Activated naive CD8-positive, alpha-beta T cell treated with anti-CD3 and anti-CD28 coated beads, Interleukin-2, amount 10 ng/mL, durations not matched to agents 7 days and 5 days (primary cell): ENCODE measurements at regions of chr19 and their contacts with region 1.

Region 1: DNA sequence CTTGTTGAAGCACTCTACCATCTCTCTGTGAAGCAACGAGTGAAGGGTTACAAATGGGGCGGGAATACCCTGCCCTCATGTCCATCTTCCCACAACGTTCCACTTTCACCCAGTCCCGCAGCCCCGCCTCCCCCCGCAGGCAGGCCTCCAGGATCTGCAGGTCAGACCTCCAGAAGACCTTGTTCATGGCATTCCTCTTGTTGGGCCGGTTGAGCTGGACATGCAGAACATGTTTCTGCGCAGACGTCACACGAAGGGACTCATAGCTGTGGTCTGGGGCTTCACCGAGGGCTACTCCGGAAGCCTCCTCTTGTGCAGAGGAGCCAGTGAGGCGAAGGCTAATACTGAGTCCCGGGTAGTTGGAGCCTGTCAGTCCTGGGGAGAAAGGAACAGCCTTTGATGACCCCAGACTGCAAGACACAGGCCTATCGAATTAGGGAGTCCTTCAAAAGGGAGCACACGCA is 420 bp downstream of the ECH1 start:
- DNase-seq: peak; percentile 59
- ATAC-seq: peak; percentile 49
- H3K4me3 Mint-ChIP-seq: peak overlapping the region; percentile 95
- H3K27ac Mint-ChIP-seq: peak overlapping the region; percentile 88
- H3K4me1 Mint-ChIP-seq: peaks cover 27% of the 10 kb centered on the region
- H3K27me3 Mint-ChIP-seq: no peaks in the 10 kb centered on the region

Region 2: DNA sequence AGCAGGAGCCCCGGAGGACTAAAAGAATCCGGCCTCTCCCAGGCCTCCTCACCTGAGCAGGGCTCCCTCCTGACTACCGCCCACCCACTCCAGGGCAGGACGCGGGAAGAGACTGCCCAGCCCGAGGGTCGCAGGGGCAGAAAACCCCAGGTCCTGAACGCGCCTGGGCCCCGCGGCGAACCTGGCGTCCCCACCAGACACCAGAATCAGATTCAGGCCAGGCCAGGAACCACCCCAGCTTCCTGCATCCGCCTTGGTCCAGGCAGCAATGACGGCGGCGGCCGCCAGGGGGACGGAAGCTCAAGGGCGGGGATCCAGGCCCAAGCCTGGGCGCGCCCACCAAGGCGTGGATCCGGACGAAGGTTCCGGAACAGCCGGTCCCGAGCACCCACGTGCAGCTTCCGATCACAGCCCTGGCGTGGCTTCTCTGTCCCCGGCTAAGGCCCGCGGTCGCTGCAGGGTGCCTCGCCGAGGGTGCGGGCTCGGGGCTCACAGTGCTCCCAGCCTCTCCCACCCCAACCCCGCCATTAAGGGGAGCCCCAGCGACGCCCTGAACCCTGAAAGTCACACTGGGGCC is 61.5 kb before region 1 on chr19:
- POLR2A ChIA-PET with region 1: interaction called, 12 read pairs
- DNase-seq: peak; percentile 92
- ATAC-seq: peak; percentile 84
- H3K4me3 Mint-ChIP-seq: peak overlapping the region; percentile 53
- H3K27ac Mint-ChIP-seq: peak overlapping the region; percentile 70
- H3K4me1 Mint-ChIP-seq: peaks cover 6% of the 10 kb centered on the region
- H3K27me3 Mint-ChIP-seq: no peaks in the 10 kb centered on the region

Region 3: GRCh38 chr19:38842439-38843174 is 11.4 kb after region 1 on chr19:
- POLR2A ChIA-PET with region 1: interaction called, 55 read pairs
- DNase-seq: peak; percentile 71
- ATAC-seq: peak; percentile 91
- H3K4me3 Mint-ChIP-seq: peak overlapping the region; percentile 79
- H3K27ac Mint-ChIP-seq: peak overlapping the region; percentile 96
- H3K4me1 Mint-ChIP-seq: peaks cover 48% of the 10 kb centered on the region
- H3K27me3 Mint-ChIP-seq: no peaks in the 10 kb centered on the region

Region 4: DNA sequence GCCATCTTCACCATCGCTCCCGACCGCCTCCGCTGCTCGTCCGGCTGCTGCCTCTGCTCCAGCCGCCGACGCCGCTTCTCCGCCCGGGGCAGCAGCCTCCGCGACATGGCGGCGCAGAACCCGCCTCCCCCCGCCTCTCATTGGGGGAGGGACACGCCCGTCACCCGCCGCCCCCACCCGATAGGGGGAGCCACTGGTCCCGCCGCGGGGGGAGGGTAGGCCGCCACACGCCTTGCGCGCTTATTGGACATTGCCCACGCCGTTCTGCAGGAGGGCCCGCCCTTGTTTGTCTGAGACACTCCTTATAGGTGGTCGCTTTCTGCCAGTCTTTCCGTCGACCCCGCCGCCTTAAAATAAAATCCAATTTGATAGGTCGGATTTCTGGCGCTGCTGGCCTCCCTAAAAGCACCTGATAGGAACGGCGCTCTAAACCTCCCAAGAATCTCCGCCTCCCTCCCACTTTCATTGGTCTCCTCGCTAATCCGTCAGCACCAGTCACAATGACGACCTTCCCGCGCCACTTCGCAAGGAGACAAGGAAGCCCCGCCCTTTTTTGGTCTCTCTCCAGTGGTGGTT is 18.8 kb after region 1 on chr19 and contains the start of gene HNRNPL:
- POLR2A ChIA-PET with region 1: interaction called, 37 read pairs
- DNase-seq: peak; percentile 100
- ATAC-seq: peak; percentile 65
- H3K4me3 Mint-ChIP-seq: peak within 1 kb of the TSS; percentile 97
- H3K27ac Mint-ChIP-seq: peak within 1 kb of the TSS; percentile 100
- H3K4me1 Mint-ChIP-seq: peaks cover 38% of the 10 kb centered on the region
- H3K27me3 Mint-ChIP-seq: no peaks in the 10 kb centered on the region
- total RNA-seq, gene HNRNPL: 441 to 455 TPM

Region 5: DNA sequence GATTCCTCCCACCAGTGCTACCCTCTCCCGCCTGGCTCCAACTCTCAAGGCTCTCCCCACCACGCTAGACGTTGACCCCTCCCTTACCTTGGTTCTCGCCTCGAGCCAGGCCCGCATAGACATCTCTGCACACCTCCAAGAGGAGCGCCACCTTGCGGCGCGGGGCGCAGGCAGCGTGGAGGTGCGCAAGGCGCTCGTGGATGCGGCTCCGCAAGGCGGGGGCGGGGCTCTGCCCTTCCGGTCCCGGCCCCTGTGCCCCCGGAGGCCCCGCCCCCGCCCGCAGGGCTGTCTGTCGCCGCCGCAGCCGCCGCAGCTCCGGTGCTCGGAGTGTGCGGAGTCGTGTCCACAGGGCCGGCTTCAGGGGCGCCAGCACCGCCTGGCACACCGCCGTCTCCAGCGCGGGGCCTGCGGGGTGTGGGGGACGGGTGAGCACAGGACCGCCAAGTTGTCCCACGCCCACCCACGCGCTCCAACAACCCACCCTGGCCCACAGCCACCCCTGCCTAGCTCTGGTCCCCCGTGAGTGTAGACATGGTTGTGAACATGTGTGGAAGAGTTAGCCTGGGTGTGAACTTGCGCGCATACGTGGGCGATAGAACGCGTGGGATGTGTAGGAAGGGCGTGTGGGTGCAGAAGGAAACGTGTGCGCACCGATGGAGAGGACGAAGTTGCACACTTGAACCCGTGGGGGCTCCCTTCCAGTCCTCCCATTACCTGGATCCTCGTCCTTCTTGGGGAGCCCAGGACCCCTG is 38.9 kb after region 1 on chr19:
- POLR2A ChIA-PET with region 1: interaction called, 13 read pairs
- DNase-seq: peak; percentile 99
- ATAC-seq: peak; percentile 97
- H3K4me3 Mint-ChIP-seq: peak overlapping the region; percentile 89
- H3K27ac Mint-ChIP-seq: peak overlapping the region; percentile 89
- H3K4me1 Mint-ChIP-seq: peaks cover 35% of the 10 kb centered on the region
- H3K27me3 Mint-ChIP-seq: no peaks in the 10 kb centered on the region